ENCODE measurements at regions of chr16 and their contacts with region 1.

Region 1: DNA sequence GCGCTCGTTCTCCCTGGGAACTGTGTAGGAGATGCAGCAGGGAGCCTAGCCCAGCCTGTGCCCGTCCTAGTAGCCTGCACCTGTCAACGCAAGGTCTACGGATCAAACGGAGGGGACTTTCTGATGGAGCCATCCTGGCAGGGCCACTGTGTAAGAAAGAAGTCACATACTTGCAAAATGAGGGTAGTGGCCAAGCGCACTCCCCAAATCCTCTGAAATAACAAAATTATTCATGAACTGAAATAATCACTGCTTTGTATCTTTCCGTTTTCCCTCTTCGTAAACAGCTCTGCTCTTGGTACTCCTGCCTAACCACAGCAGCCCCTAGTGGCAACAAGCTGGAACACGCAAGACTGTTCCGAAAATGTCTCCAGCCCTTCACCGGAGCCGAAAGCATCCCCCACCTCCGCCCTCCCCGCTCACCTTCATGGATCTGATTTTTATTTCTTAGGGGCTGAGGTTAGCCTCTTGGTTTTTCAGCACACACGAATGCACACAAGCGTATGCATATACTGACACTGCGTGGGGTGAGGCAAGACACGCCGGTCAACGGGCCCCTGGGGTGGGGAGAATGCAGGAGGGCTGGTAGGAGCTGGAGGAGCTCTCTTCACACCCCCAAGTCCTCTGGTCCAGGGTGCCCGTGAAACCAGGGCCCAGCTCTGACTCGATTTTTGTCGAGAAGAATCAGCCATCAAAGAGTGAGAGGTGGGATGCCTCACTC is 100.8 kb downstream of the ABCC12 start:
- DNase-seq: peak; percentile 66
- CTCF ChIP-seq: peak; percentile 93

Region 2: DNA sequence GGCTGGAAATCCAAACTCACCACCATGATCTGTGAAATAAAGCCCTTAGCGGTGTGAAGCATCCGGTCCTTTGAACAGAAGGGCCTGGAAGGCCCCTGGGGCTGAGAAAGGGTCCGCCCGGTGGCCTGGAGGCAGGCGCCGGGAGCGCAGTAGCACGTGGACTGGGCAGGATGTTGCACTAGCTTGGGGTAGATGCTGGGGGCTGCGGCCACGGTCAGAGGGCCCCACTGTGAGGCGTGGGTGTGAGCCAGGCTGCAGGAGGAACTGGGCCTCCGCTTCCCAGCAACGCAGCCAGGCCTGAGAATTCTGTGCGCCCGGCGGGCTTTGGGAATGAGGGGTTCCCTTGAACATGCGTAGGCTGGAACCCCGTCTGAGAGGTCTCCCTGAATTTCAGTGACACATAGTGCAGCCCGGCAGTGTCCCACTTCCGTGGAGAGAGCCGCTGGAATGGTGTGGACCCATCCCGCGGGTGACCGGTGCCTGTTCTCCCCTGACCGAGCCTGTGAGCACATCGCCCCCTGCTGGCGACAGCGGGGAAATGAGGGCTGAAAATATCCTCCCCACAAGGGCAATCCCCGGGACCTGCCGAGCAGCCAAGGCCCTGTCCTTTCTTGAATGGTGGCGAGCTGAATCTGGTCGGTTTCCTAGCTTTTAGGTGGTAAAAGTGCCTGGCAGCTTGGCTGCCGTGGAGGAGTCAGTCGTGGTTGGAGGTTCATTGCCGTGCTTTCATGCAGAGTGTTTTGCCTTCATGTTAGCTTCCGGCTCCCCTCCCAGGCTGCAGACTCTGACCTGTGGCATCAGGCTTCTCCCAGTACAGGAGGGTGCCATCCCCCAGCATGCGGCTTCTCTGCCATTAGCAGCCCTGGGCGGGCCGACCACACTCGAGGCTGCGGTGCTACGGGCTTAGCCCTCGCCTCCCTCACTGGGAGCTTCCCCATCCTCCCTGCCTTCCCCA is 1125.4 kb before region 1 on chr16:
- in situ Hi-C with region 1: loop called (anchors 25 kb)
- DNase-seq: peak; percentile 84
- CTCF ChIP-seq: peak; percentile 96

Region 3: GRCh38 chr16:47392081-47392480 is 663.0 kb before region 1 on chr16:
- in situ Hi-C with region 1: loop called (anchors 25 kb)
- DNase-seq: no peak
- CTCF ChIP-seq: peak; percentile 11

Region 4: DNA sequence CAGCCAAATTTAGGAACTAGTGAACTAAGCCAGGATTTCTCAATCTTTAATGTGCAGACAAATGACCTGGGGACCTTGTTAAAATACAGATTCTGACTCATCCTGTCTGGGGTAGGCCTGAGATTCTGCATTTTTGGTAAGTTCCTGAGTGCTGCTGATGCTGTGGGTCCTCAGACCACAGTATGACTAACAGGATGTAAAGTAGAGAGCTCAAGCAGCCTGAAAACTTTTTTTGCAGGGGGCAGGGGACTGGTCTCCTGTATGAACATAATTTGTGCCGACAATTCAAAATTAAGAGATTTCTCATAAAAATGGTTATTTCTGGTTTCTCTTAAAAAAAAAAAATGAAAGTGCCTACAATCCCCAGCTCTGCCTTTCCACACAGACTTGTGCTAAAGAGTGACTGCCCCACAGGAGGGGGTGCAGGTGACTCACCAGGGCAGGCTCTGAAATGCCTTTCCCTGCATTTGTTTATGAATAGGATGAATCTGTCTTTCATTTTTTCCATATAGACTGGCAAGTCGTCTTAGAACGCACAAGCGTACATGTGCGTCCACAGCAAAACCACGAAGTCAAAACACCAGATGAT is 322.4 kb before region 1 on chr16:
- in situ Hi-C with region 1: loop called (anchors 25 kb)
- DNase-seq: no peak
- CTCF ChIP-seq: no peak

Region 5: DNA sequence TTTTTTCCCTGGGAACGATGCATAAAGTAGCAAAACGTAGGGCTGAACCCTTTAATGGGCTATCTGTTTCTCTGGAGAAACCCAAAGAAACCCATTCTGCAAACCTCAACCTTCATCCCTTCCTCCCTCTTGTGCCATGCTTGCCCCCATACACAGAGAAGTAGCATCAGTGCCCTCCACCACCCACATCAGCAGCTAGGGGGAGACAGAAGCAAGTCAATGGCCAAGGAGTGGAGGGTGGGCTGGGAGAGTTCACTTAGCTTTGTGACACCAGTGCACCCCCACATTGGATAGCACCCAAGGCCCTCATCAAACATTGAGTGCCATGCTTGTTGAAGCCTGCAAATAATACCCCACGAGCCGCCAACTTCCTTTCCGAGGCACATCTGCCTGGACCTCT is 181.6 kb before region 1 on chr16:
- in situ Hi-C with region 1: loop called (anchors 25 kb)
- DNase-seq: no peak
- CTCF ChIP-seq: peak; percentile 45